Pancreas (tissue), 10 donors: ENCODE measurements at regions of chr7 and their contacts with region 1.

Region 1: DNA sequence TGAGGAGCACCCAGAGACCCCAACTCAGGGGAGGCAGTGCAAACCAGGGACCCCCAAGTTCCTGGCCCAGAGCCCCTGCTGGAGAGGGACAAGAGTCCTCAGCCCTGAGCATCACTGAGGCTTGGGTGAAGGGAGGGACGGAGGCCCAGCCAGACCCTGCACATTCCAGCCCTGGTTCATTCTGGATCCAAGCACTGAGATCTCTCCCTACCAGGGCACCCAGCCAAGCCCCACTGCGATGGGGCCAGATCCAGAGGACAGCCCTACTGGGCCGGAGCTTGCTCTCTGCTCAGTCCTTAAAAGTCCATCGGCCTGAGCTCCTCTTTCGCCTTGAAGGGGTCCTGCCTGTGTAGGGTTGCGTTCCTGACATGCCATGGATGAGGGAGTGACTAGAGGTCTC is 40.5 kb upstream of the RABGEF1 start:
- DNase-seq: peak in 1 of 6 donors; percentile 62
- ATAC-seq: peak in 2 of 4 donors; percentile 21 to 49
- H3K4me3 ChIP-seq: no peak overlapping the region
- H3K27ac ChIP-seq: no peak overlapping the region
- H3K4me1 ChIP-seq: no peaks in the 10 kb centered on the region
- H3K27me3 ChIP-seq: no peaks in the 10 kb centered on the region
- CTCF ChIP-seq: no peak

Region 2: DNA sequence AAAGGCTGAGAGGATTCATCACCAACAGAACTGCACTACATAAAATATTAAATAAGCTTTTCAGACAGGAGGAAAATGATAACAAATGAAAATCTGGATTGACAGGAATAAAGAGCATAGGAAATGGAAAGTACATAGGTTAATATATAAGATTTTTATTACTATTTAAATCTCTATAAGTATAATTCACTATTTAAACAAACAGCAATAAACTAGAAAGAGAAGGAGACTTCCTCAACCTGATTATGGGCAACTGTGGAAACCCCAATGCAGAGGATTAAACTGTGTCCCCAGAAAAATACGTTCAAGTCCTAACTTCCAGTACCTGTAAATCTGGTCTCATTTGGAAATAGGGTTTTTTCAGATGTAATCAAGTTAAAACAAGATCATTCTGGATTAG is 639.2 kb before region 1 on chr7:
- intact Hi-C with region 1: no loop called
- DNase-seq: no peak
- ATAC-seq: no peak
- H3K4me3 ChIP-seq: no peak overlapping the region
- H3K27ac ChIP-seq: no peak overlapping the region
- H3K4me1 ChIP-seq: no peaks in the 10 kb centered on the region
- H3K27me3 ChIP-seq: no peaks in the 10 kb centered on the region
- CTCF ChIP-seq: no peak

Region 3: GRCh38 chr7:66237906-66238772 is 461.9 kb before region 1 on chr7:
- intact Hi-C with region 1: no loop called
- DNase-seq: peak in 1 of 6 donors; percentile 14
- ATAC-seq: peak; percentile 77 to 91 (median 86)
- H3K4me3 ChIP-seq: no peak overlapping the region
- H3K27ac ChIP-seq: peak overlapping the region; percentile 44 to 79 (median 52)
- H3K4me1 ChIP-seq: peaks cover 7 to 21% (median 16%) of the 10 kb centered on the region in 3 donors
- H3K27me3 ChIP-seq: no peaks in the 10 kb centered on the region
- CTCF ChIP-seq: no peak

Region 4: DNA sequence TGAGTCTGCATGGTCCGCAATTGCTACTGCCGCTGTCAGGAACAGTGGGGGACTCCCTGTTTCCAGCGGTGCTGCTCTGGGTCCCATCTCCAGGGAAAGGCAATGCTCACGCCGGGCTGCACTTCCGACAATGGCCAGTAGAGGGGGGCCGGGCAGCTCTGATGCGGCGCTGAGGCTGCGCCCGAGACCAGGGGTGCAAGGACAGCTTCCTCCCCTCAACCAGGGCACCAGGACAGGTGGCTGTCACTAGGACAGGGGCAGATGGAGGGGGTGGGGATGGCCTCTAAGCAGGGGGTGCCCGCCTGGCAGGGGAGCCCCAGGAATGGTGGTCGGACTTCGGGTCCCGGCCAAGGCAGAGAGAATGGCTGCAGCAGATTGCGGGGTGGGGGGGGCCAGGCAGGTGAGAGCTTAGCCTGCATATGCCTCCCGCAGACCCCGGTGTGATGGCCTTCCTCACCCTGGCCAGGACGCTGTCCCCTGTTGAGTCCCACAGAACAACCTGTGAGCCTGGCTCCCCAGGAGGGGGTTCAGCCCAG is 142.3 kb before region 1 on chr7:
- intact Hi-C with region 1: loop called in 1 of 3 experiments (anchors 10 kb)
- DNase-seq: peak; percentile 45 to 94 (median 75)
- ATAC-seq: peak; percentile 81 to 96 (median 94)
- H3K4me3 ChIP-seq: no peak overlapping the region
- H3K27ac ChIP-seq: no peak overlapping the region
- H3K4me1 ChIP-seq: no peaks in the 10 kb centered on the region
- H3K27me3 ChIP-seq: no peaks in the 10 kb centered on the region
- CTCF ChIP-seq: peak; percentile 91 to 95 (median 94)

Region 5: DNA sequence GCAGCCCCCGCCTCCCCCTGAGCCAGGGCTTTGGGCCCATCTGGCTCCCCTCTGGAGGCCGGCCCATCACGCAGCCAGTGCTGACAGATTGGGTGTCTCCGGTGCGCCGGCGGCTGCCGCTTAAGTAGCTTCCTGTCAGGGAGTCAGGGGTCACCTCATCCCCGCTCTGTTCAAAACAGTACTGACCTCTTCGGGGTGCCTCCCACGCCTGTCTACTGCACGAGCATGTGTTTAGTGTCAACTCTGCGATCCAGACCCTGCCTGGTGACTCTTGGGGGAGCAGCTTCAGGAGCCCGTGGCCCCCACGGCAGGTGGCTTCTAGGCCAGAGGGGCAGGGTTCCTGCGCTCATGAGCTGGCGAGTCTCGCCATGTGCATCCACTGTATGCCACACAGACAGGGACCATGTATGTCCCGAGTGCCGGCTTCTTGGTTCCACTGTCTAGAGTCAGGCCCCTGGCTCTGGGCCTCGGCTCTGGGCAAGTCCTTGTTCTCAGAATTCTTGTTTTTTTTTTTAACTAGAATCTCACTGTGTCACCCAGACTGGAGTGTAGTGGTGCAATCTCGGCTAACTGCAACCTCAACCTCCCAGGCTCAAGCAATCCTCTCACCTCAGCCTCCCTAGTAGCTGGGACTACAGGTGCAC is 35.2 kb before region 1 on chr7:
- intact Hi-C with region 1: no loop called
- DNase-seq: peak in 1 of 6 donors; percentile 55
- ATAC-seq: no peak
- H3K4me3 ChIP-seq: no peak overlapping the region
- H3K27ac ChIP-seq: no peak overlapping the region
- H3K4me1 ChIP-seq: no peaks in the 10 kb centered on the region
- H3K27me3 ChIP-seq: no peaks in the 10 kb centered on the region
- CTCF ChIP-seq: no peak